Endothelial cell of umbilical vein (primary cell): ENCODE measurements at regions of chr10 and their contacts with region 1.

Region 1: DNA sequence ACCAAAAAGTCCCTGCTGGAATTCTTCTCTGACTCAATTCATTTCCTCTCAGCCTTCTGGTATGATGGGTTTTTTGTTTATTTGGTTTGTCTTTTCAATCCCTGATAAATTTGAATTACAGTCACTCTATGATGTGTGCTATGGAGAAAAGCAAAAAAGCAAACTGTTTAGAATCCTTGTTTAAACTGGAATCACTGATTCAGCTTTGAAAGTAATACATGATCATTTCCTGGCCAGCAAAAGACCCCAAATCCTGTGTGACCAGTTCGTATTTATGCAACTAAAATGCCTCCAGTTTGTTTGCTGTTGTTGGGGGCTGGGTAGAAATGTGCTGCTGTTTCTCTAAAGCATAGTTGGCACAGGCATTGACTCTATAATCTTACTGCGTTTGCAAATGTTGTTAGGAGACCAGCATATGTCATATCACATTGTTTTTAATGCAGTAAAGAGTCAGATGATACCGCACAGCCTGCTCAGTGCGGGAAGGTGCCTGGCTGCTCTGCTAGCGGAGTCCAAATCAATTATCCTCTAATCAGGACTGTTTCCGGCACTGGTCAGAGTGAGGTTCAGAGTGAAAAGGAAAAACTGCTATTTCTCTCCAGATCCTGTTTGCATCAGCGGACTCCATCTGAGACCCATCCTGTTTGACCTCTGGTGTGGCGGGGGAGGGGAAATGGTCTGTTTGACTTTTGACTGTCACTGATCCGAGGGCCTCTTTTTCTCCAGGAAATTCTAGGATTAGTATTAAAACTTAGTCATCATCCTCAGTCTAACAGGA is 40.6 kb upstream of the ADD3 start:
- DNase-seq: peak; percentile 87
- H3K4me3 ChIP-seq: peak overlapping the region in 2 of 3 experiments; percentile 4 to 23
- H3K27ac ChIP-seq: peak overlapping the region; percentile 66
- H3K4me1 ChIP-seq: peaks cover 33% of the 10 kb centered on the region
- H3K27me3 ChIP-seq: no peaks in the 10 kb centered on the region
- CTCF ChIP-seq: no peak
- POLR2A ChIP-seq: no peak

Region 2: DNA sequence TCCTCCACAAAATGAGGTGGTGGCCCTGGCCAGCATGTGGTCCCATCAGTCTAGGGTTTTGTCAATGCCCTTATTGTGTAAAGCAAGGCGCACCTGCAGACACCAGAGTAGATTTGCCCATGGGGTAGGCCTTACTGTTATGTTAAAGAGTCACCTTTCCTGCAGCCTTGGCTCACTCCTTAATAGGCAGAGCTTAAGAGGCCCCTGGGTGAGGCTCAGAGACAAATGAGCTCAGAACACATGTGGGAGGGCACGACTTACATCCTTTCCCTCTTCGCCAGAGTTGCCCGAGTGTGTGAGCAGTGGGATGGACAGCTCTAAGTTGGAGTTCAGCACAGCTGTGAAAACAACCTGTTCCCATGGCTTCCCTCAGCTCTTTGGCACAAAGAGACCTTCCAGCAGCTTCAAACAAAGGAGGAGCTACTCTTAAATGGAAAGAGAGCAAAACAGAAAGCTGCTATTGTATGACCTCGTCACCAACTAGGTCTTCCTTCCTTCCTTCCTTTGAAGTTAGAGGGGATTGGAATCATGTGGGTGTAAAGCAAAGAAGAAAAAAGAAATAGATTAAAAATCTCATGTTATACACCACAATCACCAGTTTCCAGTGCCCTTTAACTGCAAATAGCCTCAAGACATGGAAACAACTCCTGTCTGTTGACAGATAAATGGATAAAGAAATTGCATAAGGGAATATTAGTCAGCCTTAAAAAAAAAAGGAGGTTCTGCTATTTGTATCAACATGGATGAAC is 32.0 kb before region 1 on chr10:
- CTCF ChIA-PET with region 1: interaction called, 7 read pairs
- POLR2A ChIA-PET with region 1: interaction called, 3 read pairs
- dilution Hi-C with region 1: no loop called
- intact Hi-C with region 1: loop called (anchors 1 kb)
- DNase-seq: peak; percentile 99
- H3K4me3 ChIP-seq: peak overlapping the region in 1 of 3 experiments; percentile 26
- H3K27ac ChIP-seq: peak overlapping the region; percentile 52
- H3K4me1 ChIP-seq: peaks cover 24% of the 10 kb centered on the region
- H3K27me3 ChIP-seq: no peaks in the 10 kb centered on the region
- CTCF ChIP-seq: no peak
- POLR2A ChIP-seq: no peak

Region 3: DNA sequence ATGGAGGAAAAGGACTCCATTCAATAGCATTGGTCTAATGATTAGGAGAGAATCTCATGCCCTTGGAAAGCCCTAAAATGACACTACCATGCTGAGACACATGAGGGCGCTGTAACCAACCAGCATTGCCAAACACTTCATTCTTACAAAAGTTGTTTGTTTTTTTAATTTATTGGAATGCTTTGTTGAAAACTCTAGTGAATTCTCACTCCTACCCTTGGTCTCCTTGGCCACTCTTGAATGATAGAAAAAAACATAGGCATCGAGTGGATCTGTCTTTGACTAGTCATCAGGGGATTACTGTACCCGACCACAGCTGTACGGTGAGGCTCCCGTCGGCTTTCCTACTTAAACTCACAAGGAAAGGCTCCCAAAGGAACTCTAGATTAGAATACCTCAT is 11.3 kb after region 1 on chr10:
- CTCF ChIA-PET with region 1: interaction called, 36 read pairs
- POLR2A ChIA-PET with region 1: no interaction called
- dilution Hi-C with region 1: no loop called
- intact Hi-C with region 1: no loop called
- DNase-seq: peak; percentile 66
- H3K4me3 ChIP-seq: no peak overlapping the region
- H3K27ac ChIP-seq: no peak overlapping the region
- H3K4me1 ChIP-seq: no peaks in the 10 kb centered on the region
- H3K27me3 ChIP-seq: no peaks in the 10 kb centered on the region
- CTCF ChIP-seq: peak; percentile 71 to 77
- POLR2A ChIP-seq: no peak

Region 4: DNA sequence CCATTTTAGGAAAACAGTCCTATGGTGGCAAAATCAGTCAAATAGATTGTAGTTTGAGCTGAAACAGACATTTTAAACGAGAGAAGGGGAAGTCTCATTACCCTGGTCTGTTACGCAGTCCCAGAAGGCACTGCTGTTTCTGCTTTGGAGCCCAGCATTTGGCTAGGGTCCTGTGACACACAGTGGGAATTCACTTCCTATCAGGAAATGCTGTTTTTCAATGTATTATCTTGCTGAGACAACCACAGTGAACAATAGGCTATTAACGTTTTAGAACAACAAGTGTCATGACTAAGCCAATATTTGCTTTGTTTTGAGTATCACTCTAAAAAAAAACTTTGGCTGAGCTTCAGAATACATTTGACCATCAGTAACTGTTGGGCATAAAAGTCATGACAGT is 114.8 kb after region 1 on chr10:
- CTCF ChIA-PET with region 1: interaction called, 4 read pairs
- POLR2A ChIA-PET with region 1: no interaction called
- dilution Hi-C with region 1: no loop called
- intact Hi-C with region 1: loop called (anchors 1 kb)
- DNase-seq: peak; percentile 97
- H3K4me3 ChIP-seq: no peak overlapping the region
- H3K27ac ChIP-seq: peak overlapping the region; percentile 90
- H3K4me1 ChIP-seq: peaks cover 41% of the 10 kb centered on the region
- H3K27me3 ChIP-seq: no peaks in the 10 kb centered on the region
- CTCF ChIP-seq: no peak
- POLR2A ChIP-seq: peak; percentile 70

Region 5: DNA sequence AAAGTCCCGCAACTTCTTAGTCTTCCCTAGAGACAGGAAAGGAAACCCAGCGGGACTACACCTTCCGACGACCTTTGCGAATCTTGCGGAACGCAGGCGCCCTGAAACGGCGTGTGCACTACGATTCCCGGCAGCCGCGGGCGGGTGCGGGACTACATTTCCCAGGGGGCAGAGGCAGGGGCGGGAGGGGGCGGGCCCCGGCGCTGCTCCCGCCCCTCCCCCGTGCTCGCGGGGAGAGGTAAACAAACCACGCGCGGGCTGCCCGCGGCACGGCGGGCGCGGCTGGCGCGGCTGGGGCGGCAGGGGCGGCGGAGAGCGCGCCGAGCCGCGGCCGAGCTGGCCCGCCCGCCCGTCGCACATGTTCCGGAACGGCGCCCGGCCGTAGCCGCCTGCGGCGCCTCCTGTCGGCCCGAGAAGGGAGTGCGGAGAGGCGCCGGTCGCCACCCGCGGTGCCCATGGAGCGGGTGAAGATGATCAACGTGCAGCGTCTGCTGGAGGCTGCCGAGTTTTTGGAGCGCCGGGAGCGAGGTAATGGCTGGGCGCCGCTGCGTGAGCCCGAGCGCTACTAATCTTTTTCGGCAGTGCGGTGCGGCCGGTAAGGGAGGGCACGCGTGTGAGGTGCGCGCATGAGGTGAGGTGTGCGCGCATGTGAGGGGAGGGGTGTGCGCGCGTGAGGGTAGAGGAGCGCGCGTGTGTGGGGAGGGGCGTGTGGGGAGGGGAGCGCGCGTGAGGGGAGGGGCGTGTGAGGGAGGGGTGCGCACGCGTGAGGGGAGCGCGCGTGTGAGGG is 258.8 kb after region 1 on chr10:
- CTCF ChIA-PET with region 1: no interaction called
- POLR2A ChIA-PET with region 1: no interaction called
- dilution Hi-C with region 1: no loop called
- intact Hi-C with region 1: loop called (anchors 5 kb)
- DNase-seq: peak; percentile 89
- H3K4me3 ChIP-seq: peak overlapping the region; percentile 74 to 92 (median 75)
- H3K27ac ChIP-seq: no peak overlapping the region
- H3K4me1 ChIP-seq: peaks cover 8% of the 10 kb centered on the region
- H3K27me3 ChIP-seq: no peaks in the 10 kb centered on the region
- CTCF ChIP-seq: peak; percentile 54 to 79
- POLR2A ChIP-seq: no peak

Region 6: DNA sequence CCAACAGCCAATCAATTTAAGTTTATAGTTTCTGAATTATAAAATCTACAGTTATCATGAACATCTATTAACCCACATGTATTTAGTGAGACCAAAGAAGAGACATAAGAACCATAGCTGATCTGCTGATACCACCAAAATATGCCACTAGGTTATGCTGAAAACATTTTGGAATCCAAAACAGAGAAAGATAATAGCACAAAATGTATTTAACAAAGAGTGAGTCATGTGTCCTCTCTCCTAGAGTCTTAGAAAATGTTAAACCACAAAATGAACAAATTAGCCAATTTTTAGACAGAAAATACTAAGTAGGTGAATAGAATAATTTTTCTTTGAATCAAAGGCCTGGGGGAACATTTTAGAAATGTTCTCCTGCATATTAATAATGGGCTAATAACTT is 1688.9 kb after region 1 on chr10:
- CTCF ChIA-PET with region 1: no interaction called
- POLR2A ChIA-PET with region 1: no interaction called
- dilution Hi-C with region 1: no loop called
- intact Hi-C with region 1: no loop called
- DNase-seq: no peak
- H3K4me3 ChIP-seq: no peak overlapping the region
- H3K27ac ChIP-seq: no peak overlapping the region
- H3K4me1 ChIP-seq: no peaks in the 10 kb centered on the region
- H3K27me3 ChIP-seq: no peaks in the 10 kb centered on the region
- CTCF ChIP-seq: no peak
- POLR2A ChIP-seq: no peak